ENCODE measurements at regions of chr17 and their contacts with region 1.

Region 1: DNA sequence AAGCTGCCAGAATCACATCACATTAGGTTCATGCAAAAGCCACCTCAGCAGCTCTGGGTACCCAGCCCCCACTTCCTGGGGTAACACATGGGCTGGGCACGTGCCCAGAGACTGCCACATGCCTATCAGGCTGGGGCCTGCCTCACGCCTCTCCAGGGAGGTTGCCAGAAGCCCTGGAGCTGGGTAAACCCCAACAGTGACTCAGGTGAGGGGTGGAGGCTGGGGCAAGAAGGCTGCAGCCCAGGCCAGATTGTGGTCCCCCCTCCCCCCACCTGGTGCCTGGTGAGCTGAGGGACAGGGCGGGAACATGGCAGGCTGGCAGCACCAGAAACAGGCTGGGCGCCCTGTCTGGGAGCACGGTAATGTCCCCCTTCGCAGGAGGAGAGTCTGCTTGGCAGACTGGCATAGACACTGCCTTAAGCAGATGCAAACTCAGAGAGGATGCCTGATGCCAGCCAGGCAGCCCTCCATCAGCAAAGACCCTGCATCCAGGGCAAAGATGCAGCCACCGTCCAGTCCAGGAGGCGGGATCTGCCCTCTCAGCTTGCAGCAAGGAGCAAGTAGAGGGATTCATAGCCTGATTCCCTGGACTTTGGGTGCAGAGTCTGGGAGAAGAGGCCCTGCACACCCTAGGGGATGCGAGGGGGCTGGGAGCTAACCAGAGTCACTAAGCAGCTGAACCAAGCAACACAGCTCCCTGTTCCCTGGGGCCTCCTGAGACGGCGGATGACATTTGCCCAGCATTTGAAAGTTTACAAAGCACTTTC is 28.8 kb downstream of the NGFR start:
- DNase-seq: peak; percentile 95
- H3K4me3 Mint-ChIP-seq: no peak overlapping the region
- H3K27ac Mint-ChIP-seq: peak overlapping the region; percentile 64
- H3K4me1 Mint-ChIP-seq: peaks cover 6% of the 10 kb centered on the region
- H3K27me3 Mint-ChIP-seq: peaks cover 7% of the 10 kb centered on the region
- CTCF ChIP-seq: no peak

Region 2: GRCh38 chr17:49501504-49501903 is 22.4 kb before region 1 on chr17:
- CTCF ChIA-PET with region 1: interaction called, 6 read pairs
- POLR2A ChIA-PET with region 1: interaction called, 10 read pairs
- intact Hi-C with region 1: no loop called
- DNase-seq: peak; percentile 87
- H3K4me3 Mint-ChIP-seq: no peak overlapping the region
- H3K27ac Mint-ChIP-seq: no peak overlapping the region
- H3K4me1 Mint-ChIP-seq: peaks cover 18% of the 10 kb centered on the region
- H3K27me3 Mint-ChIP-seq: peaks cover 61% of the 10 kb centered on the region
- CTCF ChIP-seq: no peak

Region 3: GRCh38 chr17:49508061-49508865 is 15.6 kb before region 1 on chr17:
- CTCF ChIA-PET with region 1: interaction called, 7 read pairs
- POLR2A ChIA-PET with region 1: interaction called, 13 read pairs
- intact Hi-C with region 1: no loop called
- DNase-seq: peak; percentile 98
- H3K4me3 Mint-ChIP-seq: peak overlapping the region; percentile 45
- H3K27ac Mint-ChIP-seq: no peak overlapping the region
- H3K4me1 Mint-ChIP-seq: peaks cover 13% of the 10 kb centered on the region
- H3K27me3 Mint-ChIP-seq: peaks cover 22% of the 10 kb centered on the region
- CTCF ChIP-seq: no peak